ENCODE measurements at regions of chr13 and their contacts with region 1.

Region 1: GRCh38 chr13:20566898-20567874 is at the start of gene IFT88:
- DNase-seq: peak; percentile 63 to 97 (median 91)

Region 2: GRCh38 chr13:20512042-20512683 is 55.0 kb before region 1 on chr13:
- intact Hi-C with region 1: loop called (anchors 10 kb)
- DNase-seq: no peak

Region 3: DNA sequence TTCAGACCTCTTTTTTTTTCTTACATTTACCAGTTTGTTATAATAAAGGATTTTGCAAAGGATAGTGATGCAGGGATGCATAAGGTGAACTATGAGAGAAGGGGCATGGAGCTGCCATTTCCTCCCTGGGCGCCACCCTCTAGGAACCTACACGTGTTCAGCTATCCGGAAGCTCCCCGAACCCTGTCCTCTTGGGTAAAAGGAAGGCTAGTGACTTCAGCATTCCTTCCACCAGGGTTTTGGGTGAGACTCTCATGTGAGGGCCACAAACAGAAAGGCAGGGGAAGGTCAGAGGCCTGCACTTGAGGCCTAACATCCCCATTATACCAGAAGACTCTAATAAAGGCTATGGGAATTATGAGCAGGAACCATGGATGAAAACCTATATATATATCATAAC is 57.0 kb after region 1 on chr13:
- intact Hi-C with region 1: no loop called
- DNase-seq: no peak

Measured in head of caudate nucleus (tissue), 42 donors.